ENCODE measurements at regions of chr6 and their contacts with region 1.

Region 1: DNA sequence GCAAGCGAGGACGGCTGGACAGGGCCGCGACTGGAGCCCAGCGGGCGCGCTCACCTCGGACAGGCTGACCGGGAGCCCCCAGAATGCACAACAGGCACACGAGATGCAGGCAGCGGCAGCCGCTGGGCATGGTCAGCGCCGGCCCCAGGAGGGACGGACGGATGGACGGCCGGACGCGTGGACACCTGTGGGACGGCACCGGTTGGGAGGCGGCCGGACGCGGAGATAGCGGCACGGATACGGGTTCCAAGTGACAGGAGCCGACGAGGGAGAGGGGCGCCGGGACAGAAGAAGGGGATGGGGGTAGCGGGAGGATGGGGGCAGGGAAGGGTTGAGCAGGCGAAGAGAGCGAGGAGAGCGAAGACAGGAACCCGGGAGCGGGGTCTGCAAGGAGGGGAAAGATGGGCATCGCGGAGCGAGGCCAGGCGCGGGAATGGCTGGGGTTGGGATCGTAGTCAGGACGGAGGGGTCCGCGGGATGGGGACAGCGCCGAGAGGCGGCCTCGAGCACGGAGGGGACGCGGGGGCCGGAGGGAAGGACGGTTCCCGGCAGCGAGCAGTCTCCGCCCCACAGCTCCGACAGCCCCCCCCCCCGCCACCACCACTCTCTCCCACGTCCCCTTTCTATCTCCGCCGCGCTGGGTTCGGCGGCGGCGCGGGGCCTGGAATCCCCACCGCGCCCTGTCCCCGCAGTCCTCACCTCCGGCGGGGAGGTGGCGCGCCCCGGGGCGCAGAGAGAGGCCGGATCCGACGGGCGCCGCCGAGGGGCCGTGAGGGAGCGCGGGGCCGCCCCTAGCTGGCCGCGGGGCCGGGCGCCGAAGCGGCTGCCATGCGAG is 435 bp downstream of the DLK2 start:
- DNase-seq: peak; percentile 75
- H3K4me3 ChIP-seq: peak overlapping the region; percentile 42 to 62 (median 46)
- H3K27ac ChIP-seq: no peak overlapping the region
- H3K4me1 ChIP-seq: peaks cover 9% of the 10 kb centered on the region
- H3K27me3 ChIP-seq: peaks cover 6 to 17% of the 10 kb centered on the region in 2 experiments
- CTCF ChIP-seq: no peak
- POLR2A ChIP-seq: peak; percentile 12

Region 2: DNA sequence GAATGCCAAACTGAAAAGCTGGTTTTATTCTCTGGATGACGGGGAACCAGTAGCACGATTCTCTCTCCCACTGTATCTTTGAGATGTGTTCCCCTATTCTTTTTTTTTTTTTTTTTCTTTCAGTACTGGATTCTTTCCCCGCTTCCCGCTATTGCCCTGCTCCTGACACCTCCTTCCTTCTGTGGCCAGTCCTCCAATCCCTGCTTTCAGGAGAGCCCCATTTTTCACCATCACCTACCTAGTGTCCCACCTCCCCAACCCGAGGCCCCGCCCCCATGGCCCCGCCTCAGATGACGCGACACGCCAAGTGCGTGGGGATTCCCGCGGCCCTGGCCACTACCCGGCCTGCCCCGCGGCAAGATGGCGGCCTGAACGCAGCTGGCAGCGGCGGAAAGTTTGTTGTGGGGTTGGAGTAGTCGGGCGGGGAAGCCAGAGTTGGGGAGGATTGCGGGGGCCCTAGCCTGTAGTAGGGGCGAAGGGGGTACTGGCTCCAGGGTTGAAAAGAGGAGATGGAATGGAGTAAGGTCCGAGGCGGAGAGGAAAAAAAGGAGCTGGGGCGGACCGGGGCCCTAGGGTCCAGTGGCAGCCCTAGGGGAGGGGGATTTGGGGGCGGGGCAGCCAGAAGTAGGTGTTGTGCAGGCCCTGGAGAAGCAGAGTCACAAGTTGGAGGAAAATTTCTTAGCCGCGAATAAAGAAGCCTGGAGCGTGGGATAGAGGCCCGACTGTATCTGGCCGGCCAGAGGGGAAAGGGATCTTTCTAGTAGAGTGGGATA is 22.5 kb after region 1 on chr6 and contains the start of gene TJAP1:
- CTCF ChIA-PET with region 1: no interaction called
- POLR2A ChIA-PET with region 1: interaction called, 3 read pairs
- dilution Hi-C with region 1: no loop called
- intact Hi-C with region 1: loop called (anchors 2 kb)
- DNase-seq: peak; percentile 89
- H3K4me3 ChIP-seq: peak within 1 kb of the TSS; percentile 82 to 96 (median 91)
- H3K27ac ChIP-seq: peak within 1 kb of the TSS; percentile 58
- H3K4me1 ChIP-seq: peaks cover 9% of the 10 kb centered on the region
- H3K27me3 ChIP-seq: no peaks in the 10 kb centered on the region
- CTCF ChIP-seq: no peak
- POLR2A ChIP-seq: peak; percentile 89
- total RNA-seq, gene TJAP1: 31.8 and 33.1 TPM in 2 replicates

Region 3: DNA sequence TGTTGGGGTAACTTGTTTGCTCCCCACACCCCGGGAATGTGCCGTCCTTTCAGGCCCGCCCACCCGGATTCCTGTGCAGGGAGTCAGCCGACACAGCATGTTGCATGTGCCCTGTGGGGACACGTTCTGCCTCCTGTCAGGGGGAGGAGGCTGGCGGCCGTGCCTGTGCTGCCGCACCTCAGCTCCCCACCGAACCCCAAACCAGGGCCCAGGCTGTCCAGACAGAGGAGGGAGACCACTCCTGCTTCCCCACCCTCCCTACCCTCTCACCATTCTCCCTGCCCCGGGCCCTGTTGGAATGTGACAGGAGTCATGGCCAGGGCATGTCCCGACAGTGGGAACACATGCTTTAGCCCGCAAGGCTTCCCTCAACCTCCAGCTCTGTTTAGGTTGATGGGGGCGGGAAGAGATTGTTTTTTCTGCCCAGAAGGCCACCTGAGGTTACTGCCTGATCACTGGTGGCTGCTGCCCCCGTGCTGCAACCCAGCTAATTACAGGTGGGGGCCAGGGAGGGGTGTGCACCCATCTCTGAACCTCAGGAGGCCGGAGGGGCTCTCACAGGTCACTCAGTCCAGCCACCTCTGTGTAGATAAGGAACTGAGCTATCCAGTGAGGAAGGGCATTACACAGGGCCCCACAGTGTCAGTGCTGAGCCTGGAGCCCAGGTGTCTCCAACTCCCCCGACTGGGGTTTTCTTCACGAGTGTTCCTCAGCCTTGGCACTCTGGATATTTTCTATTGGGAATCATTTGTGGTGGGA is 41.6 kb after region 1 on chr6:
- CTCF ChIA-PET with region 1: interaction called, 289 read pairs
- POLR2A ChIA-PET with region 1: no interaction called
- dilution Hi-C with region 1: no loop called
- intact Hi-C with region 1: loop called (anchors 2 kb)
- DNase-seq: peak; percentile 27
- H3K4me3 ChIP-seq: no peak overlapping the region
- H3K27ac ChIP-seq: no peak overlapping the region
- H3K4me1 ChIP-seq: peaks cover 27% of the 10 kb centered on the region
- H3K27me3 ChIP-seq: no peaks in the 10 kb centered on the region
- CTCF ChIP-seq: peak; percentile 30 to 54
- POLR2A ChIP-seq: no peak

Region 4: GRCh38 chr6:44508646-44509045 is 1053.7 kb after region 1 on chr6:
- CTCF ChIA-PET with region 1: no interaction called
- POLR2A ChIA-PET with region 1: no interaction called
- dilution Hi-C with region 1: no loop called
- intact Hi-C with region 1: no loop called
- DNase-seq: no peak
- H3K4me3 ChIP-seq: no peak overlapping the region
- H3K27ac ChIP-seq: no peak overlapping the region
- H3K4me1 ChIP-seq: no peaks in the 10 kb centered on the region
- H3K27me3 ChIP-seq: peaks cover 0 to 2% of the 10 kb centered on the region in 2 experiments
- CTCF ChIP-seq: no peak
- POLR2A ChIP-seq: no peak

Measured in endothelial cell of umbilical vein (primary cell).